Panc1 (cell line): ENCODE measurements at regions of chr2 and their contacts with region 1.

Region 1: DNA sequence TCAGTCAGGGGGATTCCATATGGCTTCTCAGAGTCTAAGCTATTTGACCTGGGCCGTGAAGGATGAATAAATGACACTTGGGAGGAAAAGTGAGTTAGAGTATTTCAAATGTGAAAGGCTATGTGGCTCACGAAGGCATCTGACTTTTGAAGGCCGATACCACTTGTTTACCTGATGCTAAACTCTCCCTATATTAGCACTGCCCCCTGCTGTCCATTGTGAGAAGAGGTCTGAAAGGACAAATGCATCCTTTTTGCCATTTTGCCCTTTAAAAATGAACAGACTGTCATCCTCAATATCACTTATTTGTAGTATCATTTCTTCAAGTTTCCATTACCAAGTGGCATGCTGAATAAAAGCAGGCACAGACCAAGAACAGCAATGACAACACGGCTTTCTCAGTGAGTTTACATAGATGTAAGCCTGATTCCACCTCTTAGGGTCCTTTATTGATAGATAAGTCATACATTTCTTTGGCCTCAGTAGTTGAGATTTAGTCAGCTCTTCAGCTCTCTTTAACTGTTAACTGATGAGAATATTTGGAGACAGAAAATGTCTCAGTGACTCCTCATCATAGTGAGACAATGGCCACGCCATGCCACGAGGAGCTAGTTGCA is 40.1 kb downstream of the DOCK10 start:
- DNase-seq: peak; percentile 41
- ATAC-seq: peak; percentile 84
- H3K4me3 ChIP-seq: no peak overlapping the region
- H3K27ac ChIP-seq: peak overlapping the region; percentile 41; the same call in 1 of the 2 replicates
- H3K4me1 ChIP-seq: peaks cover 4% of the 10 kb centered on the region
- H3K27me3 ChIP-seq: no peaks in the 10 kb centered on the region
- CTCF ChIP-seq: peak; percentile 81

Region 2: DNA sequence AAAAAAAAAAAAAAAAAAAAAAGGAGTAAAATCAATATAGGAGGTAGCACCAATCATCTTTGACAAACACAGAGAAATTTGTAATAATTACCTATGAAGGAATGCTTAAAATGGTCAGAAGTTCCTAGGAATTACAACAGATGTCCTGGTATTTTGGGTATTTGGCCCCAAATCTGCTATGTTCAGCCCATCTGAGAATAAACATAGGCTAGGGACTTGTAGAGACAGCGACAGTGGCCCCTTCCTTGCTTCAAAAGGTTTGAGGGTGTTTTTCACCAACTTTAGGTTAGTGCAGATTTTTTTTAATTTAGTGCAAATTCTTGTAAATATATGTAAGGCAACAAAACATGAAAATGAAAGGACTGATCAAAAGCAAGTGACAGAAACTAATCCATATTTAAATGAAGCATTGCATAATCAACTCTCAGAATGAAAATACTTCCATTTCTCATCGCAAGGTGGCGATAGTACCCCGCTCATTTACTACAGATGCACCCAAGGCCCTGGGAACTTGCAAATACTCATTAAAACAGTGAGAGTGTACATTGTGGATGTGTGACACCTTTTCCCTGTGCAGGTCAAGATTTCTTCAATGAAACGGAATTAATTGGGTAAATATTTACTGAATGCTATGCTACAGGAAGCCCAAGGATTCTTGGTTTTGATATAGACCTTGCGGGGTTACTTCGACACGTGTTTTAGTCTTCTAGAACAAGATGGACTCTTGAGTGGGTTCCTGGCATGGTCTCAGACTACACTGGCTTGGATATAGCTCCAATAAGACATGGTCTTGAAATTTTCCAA is 644.8 kb before region 1 on chr2:
- CTCF ChIA-PET with region 1: no interaction called
- POLR2A ChIA-PET with region 1: no interaction called
- in situ Hi-C with region 1: no loop called
- intact Hi-C with region 1: loop called (anchors 2 kb)
- DNase-seq: peak; percentile 69
- ATAC-seq: peak; percentile 86
- H3K4me3 ChIP-seq: no peak overlapping the region
- H3K27ac ChIP-seq: no peak overlapping the region
- H3K4me1 ChIP-seq: 0 out of 2 replicates have a peak, but pooled peaks cover 2% of the 10 kb centered on the region
- H3K27me3 ChIP-seq: no peaks in the 10 kb centered on the region
- CTCF ChIP-seq: peak; percentile 78

Region 3: DNA sequence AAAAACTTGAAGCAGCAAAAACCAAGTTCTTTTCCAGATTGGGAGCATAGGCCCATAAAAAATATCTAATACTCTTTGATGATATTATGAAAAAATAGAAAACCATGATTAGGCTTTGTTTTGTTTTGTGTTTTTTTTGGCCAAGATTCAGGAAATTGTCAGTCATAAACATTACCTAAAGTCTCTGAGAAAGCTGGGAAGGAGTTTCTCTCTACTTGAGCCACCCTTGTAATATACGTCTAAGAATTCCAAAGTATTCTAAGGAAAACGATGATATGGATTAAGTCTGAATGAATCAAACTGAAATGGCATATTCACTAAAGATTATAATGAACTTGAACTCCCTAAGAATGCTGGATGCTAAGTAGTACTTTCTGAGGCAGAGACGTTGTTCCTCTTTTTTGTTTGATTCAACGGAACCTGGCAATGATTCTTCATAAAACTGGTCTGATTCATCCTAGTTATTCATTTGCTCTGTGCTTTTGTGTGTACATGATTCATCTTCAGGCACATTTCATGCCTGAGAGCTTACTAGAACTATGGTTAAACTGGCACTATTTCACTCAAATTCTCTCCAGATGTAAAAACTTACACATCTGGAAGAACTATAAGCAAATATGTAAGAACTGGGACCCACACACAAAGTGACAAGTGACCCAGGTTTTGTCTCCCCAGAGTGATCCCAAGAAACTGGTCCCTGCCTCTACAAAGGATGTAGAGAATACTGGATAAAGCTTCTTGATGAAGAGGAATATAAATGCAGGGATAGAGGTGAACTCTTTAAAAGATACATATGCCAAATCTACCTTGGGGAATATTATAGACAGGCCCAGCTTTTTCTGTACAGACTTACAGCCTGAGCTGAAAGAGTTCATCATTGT is 119.6 kb before region 1 on chr2:
- CTCF ChIA-PET with region 1: no interaction called
- POLR2A ChIA-PET with region 1: no interaction called
- in situ Hi-C with region 1: no loop called
- intact Hi-C with region 1: no loop called
- DNase-seq: no peak
- ATAC-seq: no peak
- H3K4me3 ChIP-seq: no peak overlapping the region
- H3K27ac ChIP-seq: no peak overlapping the region
- H3K4me1 ChIP-seq: no peaks in the 10 kb centered on the region
- H3K27me3 ChIP-seq: no peaks in the 10 kb centered on the region
- CTCF ChIP-seq: no peak

Region 4: DNA sequence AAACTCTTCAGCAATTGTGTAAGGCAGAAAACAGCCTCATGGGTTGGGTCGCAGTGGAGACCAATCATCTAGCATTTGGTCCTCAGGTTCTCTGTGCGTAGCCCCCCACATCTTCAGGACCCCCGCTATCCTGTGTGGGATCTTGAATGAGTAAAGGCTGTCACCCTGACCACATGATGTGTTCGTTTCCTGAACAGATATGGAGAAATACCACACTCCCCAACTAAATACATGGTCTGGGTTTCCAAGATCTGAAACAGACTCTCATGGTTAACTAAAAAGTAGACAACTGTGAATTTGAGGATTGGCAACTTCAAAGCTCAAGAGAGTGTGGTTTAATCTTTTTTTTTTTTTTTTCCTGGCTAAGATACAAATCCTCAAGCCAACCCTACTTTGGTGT is 17.0 kb after region 1 on chr2:
- CTCF ChIA-PET with region 1: no interaction called
- POLR2A ChIA-PET with region 1: interaction called, 13 read pairs
- in situ Hi-C with region 1: no loop called
- intact Hi-C with region 1: no loop called
- DNase-seq: no peak
- ATAC-seq: no peak
- H3K4me3 ChIP-seq: no peak overlapping the region
- H3K27ac ChIP-seq: no peak overlapping the region
- H3K4me1 ChIP-seq: no peaks in the 10 kb centered on the region
- H3K27me3 ChIP-seq: no peaks in the 10 kb centered on the region
- CTCF ChIP-seq: no peak

Region 5: GRCh38 chr2:225104321-225104720 is 102.2 kb after region 1 on chr2:
- CTCF ChIA-PET with region 1: no interaction called
- POLR2A ChIA-PET with region 1: interaction called, 10 read pairs
- in situ Hi-C with region 1: no loop called
- intact Hi-C with region 1: no loop called
- DNase-seq: no peak
- ATAC-seq: no peak
- H3K4me3 ChIP-seq: no peak overlapping the region
- H3K27ac ChIP-seq: no peak overlapping the region
- H3K4me1 ChIP-seq: peaks cover 6% of the 10 kb centered on the region
- H3K27me3 ChIP-seq: no peaks in the 10 kb centered on the region
- CTCF ChIP-seq: no peak